Ovary (tissue), 10 donors: ENCODE measurements at regions of chr9 and their contacts with region 1.

Region 1: GRCh38 chr9:136769710-136770191 is 5.4 kb upstream of the LCN15 start:
- DNase-seq: peak in 2 of 5 donors; percentile 21 to 55
- H3K4me3 ChIP-seq: no peak overlapping the region
- H3K27ac ChIP-seq: no peak overlapping the region
- H3K4me1 ChIP-seq: peaks cover 2% of the 10 kb centered on the region
- H3K27me3 ChIP-seq: no peaks in the 10 kb centered on the region
- CTCF ChIP-seq: no peak
- EP300 ChIP-seq: no peak
- POLR2A ChIP-seq: no peak

Region 2: GRCh38 chr9:136700959-136701667 is 68.6 kb before region 1 on chr9:
- intact Hi-C with region 1: no loop called
- DNase-seq: no peak
- H3K4me3 ChIP-seq: no peak overlapping the region
- H3K27ac ChIP-seq: no peak overlapping the region
- H3K4me1 ChIP-seq: peaks cover 3% of the 10 kb centered on the region
- H3K27me3 ChIP-seq: no peaks in the 10 kb centered on the region
- CTCF ChIP-seq: no peak
- EP300 ChIP-seq: no peak
- POLR2A ChIP-seq: no peak

Region 3: GRCh38 chr9:136910901-136911245 is 141.1 kb after region 1 on chr9:
- intact Hi-C with region 1: no loop called
- DNase-seq: no peak
- H3K4me3 ChIP-seq: no peak overlapping the region
- H3K27ac ChIP-seq: no peak overlapping the region
- H3K4me1 ChIP-seq: no peaks in the 10 kb centered on the region
- H3K27me3 ChIP-seq: no peaks in the 10 kb centered on the region
- CTCF ChIP-seq: no peak
- EP300 ChIP-seq: no peak
- POLR2A ChIP-seq: no peak

Region 4: GRCh38 chr9:137188490-137189296 is 418.9 kb after region 1 on chr9 and contains the starts of genes ANAPC2 and SSNA1:
- intact Hi-C with region 1: no loop called
- DNase-seq: peak; percentile 92 to 97 (median 96)
- H3K4me3 ChIP-seq: peak within 1 kb of the TSS; percentile 98
- H3K27ac ChIP-seq: peak within 1 kb of the TSS; percentile 88 to 93
- H3K4me1 ChIP-seq: peaks cover 19% of the 10 kb centered on the region
- H3K27me3 ChIP-seq: no peaks in the 10 kb centered on the region
- CTCF ChIP-seq: peak in 2 of 3 donors; percentile 27 to 46
- EP300 ChIP-seq: no peak
- POLR2A ChIP-seq: peak; percentile 82
- total RNA-seq, gene ANAPC2: 23.1 to 61.5 (median 53.9) TPM
- total RNA-seq, gene SSNA1: 34.5 to 60.7 (median 44.5) TPM

Region 5: GRCh38 chr9:137387114-137387890 is 617.6 kb after region 1 on chr9:
- intact Hi-C with region 1: loop called in 1 of 4 experiments (anchors 5 kb)
- DNase-seq: peak in 1 of 5 donors; percentile 7
- H3K4me3 ChIP-seq: no peak overlapping the region
- H3K27ac ChIP-seq: no peak overlapping the region
- H3K4me1 ChIP-seq: no peaks in the 10 kb centered on the region
- H3K27me3 ChIP-seq: no peaks in the 10 kb centered on the region
- CTCF ChIP-seq: no peak
- EP300 ChIP-seq: no peak
- POLR2A ChIP-seq: no peak